ENCODE measurements at regions of chr19 and their contacts with region 1.

Region 1: DNA sequence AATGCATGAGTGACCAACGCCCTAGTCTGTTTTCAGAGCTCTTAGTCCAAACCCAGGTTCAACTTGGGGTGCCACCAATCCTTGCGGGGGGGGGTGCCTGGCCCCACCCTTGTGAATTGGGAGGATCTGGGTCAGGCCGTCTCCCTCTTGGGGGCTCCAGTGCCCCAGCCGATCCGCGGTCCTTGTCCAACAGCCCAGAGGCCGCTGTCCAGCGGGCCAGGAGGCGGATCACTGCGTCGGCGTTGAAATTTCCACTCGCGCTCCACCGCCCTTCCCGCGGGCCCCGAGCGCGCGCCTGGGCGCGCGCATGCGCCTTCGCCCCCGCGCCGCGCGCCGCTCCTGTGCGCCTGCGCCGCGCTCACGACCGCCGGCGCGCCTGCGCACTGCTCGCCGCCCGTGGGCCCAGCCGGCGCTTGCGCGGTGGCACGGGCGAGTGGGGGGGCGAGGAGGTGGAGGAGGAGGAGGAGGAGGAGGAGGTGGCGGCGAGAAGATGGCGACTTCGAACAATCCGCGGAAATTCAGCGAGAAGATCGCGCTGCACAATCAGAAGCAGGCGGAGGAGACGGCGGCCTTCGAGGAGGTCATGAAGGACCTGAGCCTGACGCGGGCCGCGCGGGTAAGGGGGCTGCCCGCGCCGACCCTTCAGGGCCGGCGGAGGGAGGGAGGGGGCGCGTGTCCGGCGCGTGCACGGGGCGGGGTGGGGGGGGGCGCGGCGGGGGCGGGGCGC is at the start of gene CRTC1:
- DNase-seq: peak; percentile 93 to 97 (median 95)
- H3K4me3 ChIP-seq: peak within 1 kb of the TSS; percentile 70 to 86
- H3K4me3 Mint-ChIP-seq: peak within 1 kb of the TSS; percentile 86 to 92 (median 88)
- H3K27ac ChIP-seq: peak within 1 kb of the TSS; percentile 70
- H3K27ac Mint-ChIP-seq: peak within 1 kb of the TSS; percentile 82 to 95 (median 93)
- H3K4me1 ChIP-seq: peaks cover 20% of the 10 kb centered on the region
- H3K4me1 Mint-ChIP-seq: peaks cover 11 to 41% (median 21%) of the 10 kb centered on the region in 4 donors
- H3K27me3 ChIP-seq: no peaks in the 10 kb centered on the region
- H3K27me3 Mint-ChIP-seq: no peaks in the 10 kb centered on the region
- total RNA-seq, gene CRTC1: 19.6 to 20.8 TPM

Region 2: GRCh38 chr19:18700501-18701249 is 17.3 kb after region 1 on chr19:
- CTCF ChIA-PET with region 1: no interaction called
- POLR2A ChIA-PET with region 1: interaction called, 5 read pairs
- intact Hi-C with region 1: loop called (anchors 2 kb)
- DNase-seq: peak; percentile 69 to 75 (median 70)
- H3K4me3 ChIP-seq: peak overlapping the region; percentile 57 to 88
- H3K4me3 Mint-ChIP-seq: peak overlapping the region; percentile 87 to 93 (median 90)
- H3K27ac ChIP-seq: peak overlapping the region; percentile 71
- H3K27ac Mint-ChIP-seq: peak overlapping the region; percentile 86 to 95 (median 88)
- H3K4me1 ChIP-seq: peaks cover 37% of the 10 kb centered on the region
- H3K4me1 Mint-ChIP-seq: peaks cover 21 to 48% (median 36%) of the 10 kb centered on the region in 4 donors
- H3K27me3 ChIP-seq: no peaks in the 10 kb centered on the region
- H3K27me3 Mint-ChIP-seq: no peaks in the 10 kb centered on the region

Region 3: GRCh38 chr19:18798384-18799352 is 115.3 kb after region 1 on chr19:
- CTCF ChIA-PET with region 1: no interaction called
- POLR2A ChIA-PET with region 1: no interaction called
- intact Hi-C with region 1: no loop called
- DNase-seq: no peak
- H3K4me3 ChIP-seq: no peak overlapping the region
- H3K4me3 Mint-ChIP-seq: no peak overlapping the region
- H3K27ac ChIP-seq: no peak overlapping the region
- H3K27ac Mint-ChIP-seq: no peak overlapping the region
- H3K4me1 ChIP-seq: no peaks in the 10 kb centered on the region
- H3K4me1 Mint-ChIP-seq: no peaks in the 10 kb centered on the region
- H3K27me3 ChIP-seq: no peaks in the 10 kb centered on the region
- H3K27me3 Mint-ChIP-seq: peaks cover 20 to 22% of the 10 kb centered on the region in 2 donors

Region 4: GRCh38 chr19:18831524-18832305 is 148.3 kb after region 1 on chr19 and contains the start of gene UPF1:
- CTCF ChIA-PET with region 1: no interaction called
- POLR2A ChIA-PET with region 1: interaction called, 5 read pairs
- intact Hi-C with region 1: loop called (anchors 1 kb)
- DNase-seq: peak; percentile 94 to 97 (median 95)
- H3K4me3 ChIP-seq: peak within 1 kb of the TSS; percentile 64 to 85
- H3K4me3 Mint-ChIP-seq: peak within 1 kb of the TSS; percentile 90 to 99 (median 95)
- H3K27ac ChIP-seq: peak within 1 kb of the TSS; percentile 75
- H3K27ac Mint-ChIP-seq: peak within 1 kb of the TSS; percentile 89 to 96 (median 93)
- H3K4me1 ChIP-seq: peaks cover 36% of the 10 kb centered on the region
- H3K4me1 Mint-ChIP-seq: peaks cover 29 to 47% (median 36%) of the 10 kb centered on the region in 4 donors
- H3K27me3 ChIP-seq: no peaks in the 10 kb centered on the region
- H3K27me3 Mint-ChIP-seq: peaks cover 2 to 5% of the 10 kb centered on the region in 2 donors
- total RNA-seq, gene UPF1: 127 to 130 TPM

Measured in CD4-positive, alpha-beta memory T cell (primary cell).